IMR-90 (cell line): ENCODE measurements at regions of chr16 and their contacts with region 1.

Region 1: DNA sequence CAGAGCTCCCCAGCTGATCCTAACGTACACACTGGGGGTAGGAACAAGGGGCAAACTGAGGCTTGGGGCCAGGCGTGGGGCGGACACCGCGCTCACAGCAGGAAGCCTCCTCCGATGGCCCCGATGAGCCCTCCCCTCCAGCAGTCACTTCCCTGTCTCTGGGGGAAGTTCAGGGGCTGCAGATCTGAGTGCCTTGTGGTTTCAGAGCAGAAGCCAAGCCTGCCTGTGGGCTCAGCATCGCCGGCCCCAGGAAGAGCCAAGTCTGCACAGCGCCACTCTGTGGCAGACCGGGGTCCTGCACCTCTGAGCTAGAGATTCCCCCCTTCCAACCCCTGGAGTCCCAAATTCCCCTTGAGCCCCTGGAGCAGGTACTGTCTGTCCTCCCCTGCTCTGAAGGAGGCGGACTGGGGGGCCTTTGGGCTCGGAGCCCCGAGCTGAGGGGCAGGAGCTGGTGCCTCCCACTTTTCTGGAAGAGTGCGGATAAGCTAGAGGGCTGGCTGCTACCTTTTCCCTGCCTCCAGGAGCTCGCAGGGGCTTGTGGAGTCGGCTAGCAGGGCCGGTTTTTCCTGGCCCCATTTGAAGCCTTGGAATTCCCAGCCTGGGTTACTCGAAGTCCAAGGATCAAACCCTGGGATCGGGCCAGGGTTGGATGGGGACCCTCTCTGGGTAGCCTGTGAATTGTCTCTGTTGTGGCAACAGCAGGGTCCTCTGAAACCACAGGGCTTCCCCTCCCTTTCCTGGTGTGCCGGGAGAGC is 2.9 kb downstream of the GSE1 start:
- DNase-seq: peak; percentile 81
- ATAC-seq: peak; percentile 35
- H3K4me3 ChIP-seq: no peak overlapping the region
- H3K27ac ChIP-seq: no peak overlapping the region
- H3K4me1 ChIP-seq: peaks cover 12% of the 10 kb centered on the region
- H3K27me3 ChIP-seq: no peaks in the 10 kb centered on the region
- CTCF ChIP-seq: peak; percentile 91
- POLR2A ChIP-seq: no peak
- RAD21 ChIP-seq: peak; percentile 83

Region 2: GRCh38 chr16:85270374-85270773 is 345.7 kb before region 1 on chr16:
- CTCF ChIA-PET with region 1: no interaction called
- POLR2A ChIA-PET with region 1: no interaction called
- dilution Hi-C with region 1: no loop called
- in situ Hi-C with region 1: loop called (anchors 5 kb)
- intact Hi-C with region 1: loop called (anchors 5 kb)
- DNase-seq: no peak
- ATAC-seq: no peak
- H3K4me3 ChIP-seq: no peak overlapping the region
- H3K27ac ChIP-seq: no peak overlapping the region
- H3K4me1 ChIP-seq: no peaks in the 10 kb centered on the region
- H3K27me3 ChIP-seq: no peaks in the 10 kb centered on the region
- CTCF ChIP-seq: no peak
- POLR2A ChIP-seq: no peak
- RAD21 ChIP-seq: no peak

Region 3: GRCh38 chr16:85369741-85370528 is 246.1 kb before region 1 on chr16:
- CTCF ChIA-PET with region 1: interaction called, 3 read pairs
- POLR2A ChIA-PET with region 1: no interaction called
- dilution Hi-C with region 1: no loop called
- in situ Hi-C with region 1: no loop called
- intact Hi-C with region 1: loop called (anchors 2 kb)
- DNase-seq: no peak
- ATAC-seq: peak; percentile 85
- H3K4me3 ChIP-seq: no peak overlapping the region
- H3K27ac ChIP-seq: no peak overlapping the region
- H3K4me1 ChIP-seq: peaks cover 24% of the 10 kb centered on the region
- H3K27me3 ChIP-seq: no peaks in the 10 kb centered on the region
- CTCF ChIP-seq: peak; percentile 70
- POLR2A ChIP-seq: no peak
- RAD21 ChIP-seq: peak; percentile 66